HCT116 (cell line): ENCODE measurements at regions of chr1 and their contacts with region 1.

Region 1: DNA sequence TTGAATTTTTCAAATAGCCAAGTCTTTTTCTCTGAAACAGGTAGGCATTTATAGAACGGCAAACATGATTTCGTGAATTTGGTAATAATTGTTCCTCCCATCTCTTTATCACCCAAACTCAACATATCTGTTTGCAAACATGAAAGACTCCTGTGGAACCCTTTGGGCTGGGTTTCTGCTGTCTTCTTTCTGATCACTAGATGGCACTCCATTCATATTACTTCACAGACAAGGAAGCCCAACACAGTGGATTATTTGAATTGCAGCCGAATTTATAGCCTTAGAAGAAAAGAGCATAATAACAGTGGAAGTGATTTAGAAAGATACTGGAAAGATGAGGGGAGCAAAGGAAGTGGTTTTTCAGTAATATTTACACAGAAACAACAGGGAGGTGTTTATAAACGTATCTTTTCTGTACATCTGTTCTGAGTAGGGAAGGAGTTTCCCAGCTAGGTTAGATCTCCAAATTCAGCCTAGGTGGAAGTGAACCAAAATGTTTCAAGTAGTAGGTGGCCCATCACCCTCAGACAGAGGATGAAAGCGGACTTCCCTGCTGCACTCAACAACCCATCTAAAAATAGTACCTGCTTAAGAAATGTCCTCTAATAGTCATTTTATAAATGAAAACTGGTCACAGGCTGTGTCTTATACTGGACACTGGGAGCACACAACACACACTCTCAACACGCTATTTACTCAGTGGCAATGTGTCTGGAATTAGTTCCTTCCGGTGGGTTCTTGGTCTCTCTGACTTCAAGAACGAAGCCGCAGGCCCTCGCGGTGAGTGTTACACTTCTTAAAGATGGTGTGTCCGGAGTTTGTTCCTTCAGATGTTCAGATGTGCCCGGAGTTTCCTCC is 67.6 kb downstream of the MAP3K21 start:
- DNase-seq: peak; percentile 54
- ATAC-seq: peak; percentile 97
- H3K4me3 ChIP-seq: no peak overlapping the region
- H3K27ac ChIP-seq: no peak overlapping the region
- H3K4me1 ChIP-seq: no peaks in the 10 kb centered on the region
- H3K27me3 ChIP-seq: no peaks in the 10 kb centered on the region
- CTCF ChIP-seq: peak; percentile 86 to 92 (median 86); a peak in 5 of 6 replicates
- POLR2A ChIP-seq: no peak
- RAD21 ChIP-seq: peak; percentile 93

Region 2: GRCh38 chr1:233668725-233669294 is 273.7 kb after region 1 on chr1:
- CTCF ChIA-PET with region 1: no interaction called
- POLR2A ChIA-PET with region 1: no interaction called
- RAD21 ChIA-PET with region 1: no interaction called
- intact Hi-C with region 1: no loop called
- DNase-seq: peak; percentile 83
- ATAC-seq: peak; percentile 97
- H3K4me3 ChIP-seq: no peak overlapping the region
- H3K27ac ChIP-seq: no peak overlapping the region
- H3K4me1 ChIP-seq: peaks cover 6 to 32% of the 10 kb centered on the region in 2 experiments; a peak in 3 of 4 replicates
- H3K27me3 ChIP-seq: no peaks in the 10 kb centered on the region
- CTCF ChIP-seq: no peak
- POLR2A ChIP-seq: no peak
- RAD21 ChIP-seq: peak; percentile 36

Region 3: GRCh38 chr1:234065794-234066447 is 670.8 kb after region 1 on chr1:
- CTCF ChIA-PET with region 1: interaction called, 3 read pairs
- POLR2A ChIA-PET with region 1: no interaction called
- RAD21 ChIA-PET with region 1: no interaction called
- intact Hi-C with region 1: loop called (anchors 1 kb)
- DNase-seq: peak; percentile 58
- ATAC-seq: peak; percentile 97
- H3K4me3 ChIP-seq: no peak overlapping the region
- H3K27ac ChIP-seq: no peak overlapping the region
- H3K4me1 ChIP-seq: no peaks in the 10 kb centered on the region
- H3K27me3 ChIP-seq: no peaks in the 10 kb centered on the region
- CTCF ChIP-seq: peak; percentile 75 to 81 (median 76)
- POLR2A ChIP-seq: no peak
- RAD21 ChIP-seq: peak; percentile 91